ENCODE measurements at regions of chr9 and their contacts with region 1.

Region 1: DNA sequence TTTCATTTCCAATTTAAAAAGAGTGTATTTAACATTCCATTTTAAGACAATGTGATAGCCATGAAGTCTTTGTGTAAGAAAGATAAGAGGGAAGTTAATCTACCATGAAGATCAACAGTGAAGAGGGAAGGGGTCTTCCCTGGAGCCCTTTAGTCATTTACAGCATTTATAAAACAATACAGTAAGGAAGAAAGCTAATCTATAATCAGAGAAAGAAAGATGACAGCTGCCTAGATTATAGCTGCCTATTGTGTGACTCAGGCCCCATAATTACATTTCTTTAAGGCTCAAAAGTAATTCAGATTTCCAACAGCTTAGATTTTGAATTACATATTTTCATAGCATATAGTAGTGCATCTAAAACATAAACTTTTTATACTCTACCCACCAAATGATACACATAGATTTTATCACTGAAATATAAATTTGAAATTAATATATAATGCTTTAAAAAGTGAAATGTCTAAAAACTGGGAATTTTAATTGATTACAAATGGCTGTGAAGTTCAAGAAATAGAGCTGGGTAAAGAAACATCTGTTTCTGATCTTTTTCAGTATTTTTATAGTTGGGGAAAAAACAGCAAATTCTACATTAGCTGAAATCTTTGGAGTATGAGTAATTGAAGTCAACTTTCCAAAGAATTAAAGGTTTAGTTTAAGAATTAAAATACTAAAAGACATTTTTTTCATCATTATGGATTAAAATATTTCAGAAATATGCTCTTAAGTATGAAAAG is 89.6 kb downstream of the RIC1 start:
- DNase-seq: no peak
- ATAC-seq: no peak
- H3K4me3 ChIP-seq: no peak overlapping the region
- H3K4me3 Mint-ChIP-seq: no peak overlapping the region
- H3K27ac ChIP-seq: no peak overlapping the region
- H3K27ac Mint-ChIP-seq: peak overlapping the region in 1 of 2 donors; percentile 14
- H3K4me1 ChIP-seq: no peaks in the 10 kb centered on the region
- H3K4me1 Mint-ChIP-seq: peaks cover 4 to 8% (median 7%) of the 10 kb centered on the region in 3 donors
- H3K27me3 ChIP-seq: no peaks in the 10 kb centered on the region
- H3K27me3 Mint-ChIP-seq: no peaks in the 10 kb centered on the region

Region 2: GRCh38 chr9:5617749-5618148 is 100.7 kb before region 1 on chr9:
- CTCF ChIA-PET with region 1: no interaction called
- POLR2A ChIA-PET with region 1: no interaction called
- DNase-seq: no peak
- ATAC-seq: peak in 1 of 4 experiments; percentile 22
- H3K4me3 ChIP-seq: no peak overlapping the region
- H3K4me3 Mint-ChIP-seq: no peak overlapping the region
- H3K27ac ChIP-seq: no peak overlapping the region
- H3K27ac Mint-ChIP-seq: peak overlapping the region in 1 of 2 donors; percentile 9
- H3K4me1 ChIP-seq: no peaks in the 10 kb centered on the region
- H3K4me1 Mint-ChIP-seq: peaks cover 39 to 53% (median 42%) of the 10 kb centered on the region in 3 donors
- H3K27me3 ChIP-seq: no peaks in the 10 kb centered on the region
- H3K27me3 Mint-ChIP-seq: no peaks in the 10 kb centered on the region

Region 3: DNA sequence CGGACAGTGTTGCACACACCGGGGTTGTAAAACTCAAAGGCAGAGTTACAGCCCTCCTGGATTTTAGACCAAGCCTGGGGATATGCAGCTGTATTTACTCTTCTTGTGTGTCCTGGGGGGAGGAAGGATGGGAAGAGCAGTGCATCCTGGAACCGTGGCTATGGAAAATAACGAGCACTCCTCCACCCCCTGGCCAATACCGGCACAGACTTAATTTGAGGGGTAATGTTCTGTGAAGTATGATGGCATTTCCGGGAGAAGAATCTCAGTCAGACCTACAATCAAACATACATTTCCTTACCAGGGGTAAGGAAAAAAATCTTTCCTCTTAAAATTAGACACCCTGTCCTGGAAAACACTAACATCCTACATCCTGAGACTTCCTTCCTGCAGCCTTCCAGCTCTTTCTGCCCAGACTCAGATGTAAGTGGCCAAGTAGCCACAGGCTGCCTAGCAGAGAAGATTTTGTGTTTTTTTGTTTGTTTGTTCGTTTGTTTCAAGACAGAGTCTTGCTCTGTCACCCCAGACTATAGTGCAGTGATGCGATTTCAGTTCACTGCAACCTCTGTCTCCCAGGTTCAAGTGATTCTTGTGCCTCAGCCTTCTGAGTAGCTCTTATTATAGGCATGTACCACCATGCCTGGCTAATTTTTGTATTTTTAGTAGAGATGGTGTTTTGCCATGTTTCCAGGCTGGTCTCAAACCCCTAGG is 125.5 kb after region 1 on chr9:
- CTCF ChIA-PET with region 1: no interaction called
- POLR2A ChIA-PET with region 1: no interaction called
- DNase-seq: peak in 1 of 35 experiments; percentile 28
- ATAC-seq: peak in 2 of 4 experiments; percentile 25 to 29
- H3K4me3 ChIP-seq: peak overlapping the region in 1 of 2 donors; percentile 39
- H3K4me3 Mint-ChIP-seq: peak overlapping the region; percentile 59 to 78 (median 62)
- H3K27ac ChIP-seq: peak overlapping the region; percentile 55
- H3K27ac Mint-ChIP-seq: peak overlapping the region; percentile 93 to 94
- H3K4me1 ChIP-seq: peaks cover 27 to 56% of the 10 kb centered on the region in 2 experiments
- H3K4me1 Mint-ChIP-seq: peaks cover 54 to 69% (median 57%) of the 10 kb centered on the region in 3 donors
- H3K27me3 ChIP-seq: no peaks in the 10 kb centered on the region
- H3K27me3 Mint-ChIP-seq: peaks cover 0 to 1% of the 10 kb centered on the region in 2 donors

Region 4: GRCh38 chr9:5947912-5948311 is 229.4 kb after region 1 on chr9:
- CTCF ChIA-PET with region 1: interaction called in 1 of 2 experiments, 10 read pairs
- POLR2A ChIA-PET with region 1: no interaction called
- DNase-seq: peak in 3 of 35 experiments; percentile 1 to 10 (median 1)
- ATAC-seq: no peak
- H3K4me3 ChIP-seq: no peak overlapping the region
- H3K4me3 Mint-ChIP-seq: no peak overlapping the region
- H3K27ac ChIP-seq: no peak overlapping the region
- H3K27ac Mint-ChIP-seq: peak overlapping the region in 1 of 2 donors; percentile 22
- H3K4me1 ChIP-seq: peaks cover 3 to 8% of the 10 kb centered on the region in 2 experiments
- H3K4me1 Mint-ChIP-seq: peaks cover 21 to 24% (median 24%) of the 10 kb centered on the region in 3 donors
- H3K27me3 ChIP-seq: no peaks in the 10 kb centered on the region
- H3K27me3 Mint-ChIP-seq: no peaks in the 10 kb centered on the region

Measured in T-cell (primary cell).